Right cardiac atrium (tissue), 5 donors: ENCODE measurements at regions of chr1 and their contacts with region 1.

Region 1: DNA sequence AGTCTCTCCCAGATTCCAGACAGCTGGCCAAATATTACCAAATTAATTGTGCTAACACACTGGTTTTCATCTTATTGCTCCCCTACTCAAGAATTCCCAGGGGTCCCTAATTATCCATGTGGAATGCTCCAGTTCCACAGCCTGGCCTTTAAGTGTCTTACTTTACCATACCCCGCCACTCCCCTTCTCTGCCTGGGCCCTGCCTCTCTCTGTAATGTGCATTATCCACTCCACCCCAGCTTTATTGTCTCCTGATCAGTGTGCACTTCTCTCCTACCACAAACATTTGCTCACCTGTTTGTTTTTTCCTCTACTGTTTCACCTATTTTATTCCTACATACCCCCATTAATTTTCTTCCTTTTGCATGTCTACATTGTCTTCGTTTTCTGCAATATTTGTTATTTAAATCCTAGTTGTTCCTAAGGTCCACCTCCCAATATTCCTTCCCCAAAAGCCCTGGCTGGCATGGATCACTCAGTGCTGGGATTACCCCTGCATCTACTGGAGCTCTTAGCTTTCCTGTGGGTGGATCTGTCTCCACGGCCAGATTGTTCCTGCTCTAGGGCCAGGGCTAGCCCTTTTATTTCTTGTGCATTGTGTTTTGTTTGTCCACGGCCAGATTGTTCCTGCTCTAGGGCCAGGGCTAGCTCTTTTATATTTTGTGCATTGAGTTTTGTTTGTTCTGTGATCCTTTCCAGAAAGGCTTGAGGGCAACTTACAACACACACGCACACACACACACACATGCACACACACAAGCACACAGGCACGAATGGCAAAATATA is 33.4 kb upstream of the ATP1B1 start:
- DNase-seq: no peak
- ATAC-seq: peak in 1 of 2 donors; percentile 63
- H3K4me3 ChIP-seq: no peak overlapping the region
- H3K27ac ChIP-seq: no peak overlapping the region
- H3K4me1 ChIP-seq: no peaks in the 10 kb centered on the region
- H3K27me3 ChIP-seq: no peaks in the 10 kb centered on the region

Region 2: DNA sequence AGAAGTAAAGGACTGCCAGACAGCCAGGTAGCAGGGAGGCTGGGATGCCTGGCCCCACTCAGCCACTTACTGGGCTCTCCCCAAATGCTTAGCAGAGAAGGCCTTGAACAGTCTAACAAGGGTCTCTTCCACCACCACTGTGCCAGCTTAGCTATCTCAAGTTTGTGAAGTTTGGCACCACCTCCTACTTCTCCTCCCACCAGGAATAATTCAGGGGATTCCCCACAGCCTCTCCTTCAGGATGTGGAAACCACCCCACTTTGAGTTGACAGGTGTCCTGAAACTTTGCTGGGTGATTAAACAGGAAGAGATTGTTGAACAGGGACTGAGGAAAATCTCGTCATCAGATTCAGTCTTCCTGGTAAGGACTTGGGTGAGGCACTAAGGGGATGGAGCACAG is 26.1 kb before region 1 on chr1:
- intact Hi-C with region 1: loop called in 1 of 4 experiments (anchors 2 kb)
- DNase-seq: no peak
- ATAC-seq: no peak
- H3K4me3 ChIP-seq: no peak overlapping the region
- H3K27ac ChIP-seq: no peak overlapping the region
- H3K4me1 ChIP-seq: no peaks in the 10 kb centered on the region
- H3K27me3 ChIP-seq: no peaks in the 10 kb centered on the region